K562 (cell line): ENCODE measurements at regions of chr11 and their contacts with region 1.

Region 1: DNA sequence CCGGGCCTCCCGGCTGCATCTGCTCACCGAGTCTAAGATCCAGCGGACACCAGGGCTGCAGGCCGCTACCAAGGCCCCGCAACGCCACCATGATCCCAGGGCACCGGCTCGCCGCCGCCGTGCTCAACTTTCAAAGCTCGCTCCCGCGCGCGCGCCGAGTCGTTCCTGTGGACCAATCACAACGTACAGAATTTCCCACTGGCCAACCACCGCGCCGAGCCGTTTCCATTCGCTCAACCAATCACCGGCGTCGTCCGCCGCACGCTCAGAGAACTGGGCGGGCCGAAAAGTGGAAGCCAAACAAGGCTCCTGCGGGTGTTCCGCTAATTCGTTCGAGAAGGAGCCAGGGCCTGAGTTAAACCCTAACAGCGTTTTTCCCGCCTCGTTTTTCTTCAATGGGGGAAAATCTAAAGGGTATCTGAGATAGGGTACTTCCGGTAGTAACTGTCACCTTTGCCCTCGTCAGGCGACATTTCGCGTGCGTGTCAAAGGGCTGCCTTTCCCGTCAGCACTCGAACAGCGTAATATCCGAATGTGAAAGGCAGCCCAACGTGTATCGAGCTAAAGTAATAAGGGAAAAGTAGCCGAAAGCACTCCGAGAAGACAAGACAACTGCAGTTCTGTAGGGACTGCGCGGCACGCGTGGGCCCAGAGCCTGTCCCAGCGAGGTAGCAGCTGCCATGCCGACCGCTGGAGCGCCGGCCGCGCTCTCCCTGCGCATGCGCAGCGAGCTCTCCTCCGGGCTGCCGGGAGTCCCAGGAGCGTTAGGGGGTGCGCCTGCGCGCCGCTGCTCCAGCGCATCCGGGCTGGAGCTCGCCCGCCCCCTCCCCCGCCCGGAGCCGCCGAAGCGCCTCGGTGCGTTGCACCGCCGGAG is at the starts of genes NCAPD3 and VPS26B:
- DNase-seq: peak; percentile 96 to 98 (median 98)
- ATAC-seq: peak; percentile 92
- H3K4me3 ChIP-seq: peak within 1 kb of the TSS; percentile 77
- H3K27ac ChIP-seq: peak within 1 kb of the TSS; percentile 98
- H3K4me1 ChIP-seq: peaks cover 16 to 31% of the 10 kb centered on the region in 2 experiments; a peak in 4 of 5 replicates
- H3K27me3 ChIP-seq: no peaks in the 10 kb centered on the region
- CTCF ChIP-seq: no peak
- EP300 ChIP-seq: no peak
- POLR2A ChIP-seq: peak; percentile 98
- RAD21 ChIP-seq: 0 out of 4 replicates have a peak, but pooled peaks of 1 of the 2 experiments have one; percentile 8
- polyA plus RNA-seq, gene NCAPD3: 23.6 to 39.8 TPM
- polyA plus RNA-seq, gene VPS26B: 3.5 to 4.6 TPM

Region 2: DNA sequence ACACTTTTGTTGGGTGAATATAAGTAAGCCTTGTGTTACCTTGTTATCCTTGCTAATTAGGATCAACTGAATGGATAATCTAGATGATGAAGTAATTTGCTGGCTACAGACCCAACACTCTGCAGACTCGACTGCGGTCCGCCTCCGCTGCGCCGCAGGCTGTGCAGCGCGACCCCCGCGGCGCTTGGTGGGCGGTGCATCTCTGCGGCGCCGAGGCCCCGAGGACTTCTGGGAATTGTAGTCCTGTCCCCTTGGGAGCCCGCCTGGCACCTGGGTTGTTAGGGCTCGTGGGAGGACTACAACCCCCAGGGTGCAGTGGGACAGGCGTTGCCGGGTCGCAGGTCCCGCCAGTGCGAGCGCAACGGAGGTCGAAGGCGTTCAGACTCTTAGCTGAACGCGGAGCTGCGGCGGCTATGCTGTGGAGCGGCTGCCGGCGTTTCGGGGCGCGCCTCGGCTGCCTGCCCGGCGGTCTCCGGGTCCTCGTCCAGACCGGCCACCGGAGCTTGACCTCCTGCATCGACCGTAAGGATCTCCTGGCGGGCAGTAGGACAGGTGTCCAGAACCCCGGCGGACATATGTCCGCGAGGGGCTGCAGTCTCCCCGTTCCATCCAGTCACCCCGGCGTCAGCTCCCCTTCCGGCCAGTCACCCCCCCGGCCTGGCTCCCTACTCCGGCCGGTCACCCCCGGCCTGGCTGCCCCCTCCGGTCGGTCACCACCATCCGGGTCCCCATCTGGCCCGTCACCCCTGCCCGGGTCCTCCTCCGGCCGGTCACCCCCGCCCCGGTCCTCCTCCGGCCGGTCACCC is 29.3 kb after region 1 on chr11 and contains the starts of genes ACAD8 and THYN1:
- CTCF ChIA-PET with region 1: no interaction called
- POLR2A ChIA-PET with region 1: interaction called, 4 read pairs
- in situ Hi-C with region 1: no loop called
- intact Hi-C with region 1: loop called (anchors 1 kb)
- DNase-seq: peak; percentile 97 to 98 (median 97)
- ATAC-seq: peak; percentile 99
- H3K4me3 ChIP-seq: peak within 1 kb of the TSS; percentile 92
- H3K27ac ChIP-seq: peak within 1 kb of the TSS; percentile 54
- H3K4me1 ChIP-seq: peaks cover 3 to 17% of the 10 kb centered on the region in 2 experiments; a peak in 4 of 5 replicates
- H3K27me3 ChIP-seq: no peaks in the 10 kb centered on the region
- CTCF ChIP-seq: peak in 2 of 3 experiments; percentile 1 to 8; a peak in 1 of 6 replicates
- EP300 ChIP-seq: no peak
- POLR2A ChIP-seq: peak; percentile 74
- RAD21 ChIP-seq: no peak; a peak in 1 of 4 replicates
- polyA plus RNA-seq, gene ACAD8: 6.5 to 11.5 TPM
- polyA plus RNA-seq, gene THYN1: 229 to 279 TPM

Region 3: DNA sequence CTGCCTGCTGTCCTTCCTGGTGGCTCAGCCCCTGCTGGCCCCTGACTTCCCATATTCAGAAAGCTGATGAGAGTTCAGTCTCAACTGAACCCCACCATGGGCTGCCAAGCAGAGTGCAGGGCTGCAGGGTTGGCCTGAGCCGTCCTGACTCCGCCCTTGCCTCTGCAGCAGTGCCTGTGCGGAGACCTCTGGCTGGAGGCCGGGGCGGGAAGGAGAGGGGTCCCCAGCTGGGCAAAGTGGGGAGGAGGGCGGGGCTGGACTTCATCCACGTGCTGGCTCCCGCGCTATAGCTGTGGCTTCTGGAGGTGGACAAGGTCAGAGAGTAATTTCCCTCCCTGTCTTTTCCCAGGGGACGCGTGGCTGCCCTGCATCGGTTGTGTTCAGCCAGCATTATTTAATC is 65.7 kb after region 1 on chr11:
- CTCF ChIA-PET with region 1: no interaction called
- POLR2A ChIA-PET with region 1: no interaction called
- in situ Hi-C with region 1: no loop called
- intact Hi-C with region 1: no loop called
- DNase-seq: peak; percentile 21 to 37 (median 31)
- ATAC-seq: peak; percentile 75
- H3K4me3 ChIP-seq: no peak overlapping the region
- H3K27ac ChIP-seq: peak overlapping the region; percentile 22; the same call in 2 of the 3 replicates
- H3K4me1 ChIP-seq: peaks cover 5 to 11% of the 10 kb centered on the region in 2 experiments; a peak in 3 of 5 replicates
- H3K27me3 ChIP-seq: peaks cover 16 to 36% of the 10 kb centered on the region in 2 experiments
- CTCF ChIP-seq: no peak
- EP300 ChIP-seq: no peak
- POLR2A ChIP-seq: no peak
- RAD21 ChIP-seq: no peak

Region 4: GRCh38 chr11:134322553-134322952 is 98.5 kb after region 1 on chr11:
- CTCF ChIA-PET with region 1: no interaction called
- POLR2A ChIA-PET with region 1: no interaction called
- in situ Hi-C with region 1: no loop called
- intact Hi-C with region 1: no loop called
- DNase-seq: no peak
- ATAC-seq: no peak
- H3K4me3 ChIP-seq: no peak overlapping the region
- H3K27ac ChIP-seq: no peak overlapping the region
- H3K4me1 ChIP-seq: peaks cover 0 to under 1% of the 10 kb centered on the region in 2 experiments; a peak in 3 of 5 replicates
- H3K27me3 ChIP-seq: peaks cover 3 to 6% of the 10 kb centered on the region in 2 experiments; a peak in 3 of 5 replicates
- CTCF ChIP-seq: no peak
- EP300 ChIP-seq: no peak
- POLR2A ChIP-seq: no peak
- RAD21 ChIP-seq: no peak